IMR-90 (cell line): ENCODE measurements at regions of chr6 and their contacts with region 1.

Region 1: DNA sequence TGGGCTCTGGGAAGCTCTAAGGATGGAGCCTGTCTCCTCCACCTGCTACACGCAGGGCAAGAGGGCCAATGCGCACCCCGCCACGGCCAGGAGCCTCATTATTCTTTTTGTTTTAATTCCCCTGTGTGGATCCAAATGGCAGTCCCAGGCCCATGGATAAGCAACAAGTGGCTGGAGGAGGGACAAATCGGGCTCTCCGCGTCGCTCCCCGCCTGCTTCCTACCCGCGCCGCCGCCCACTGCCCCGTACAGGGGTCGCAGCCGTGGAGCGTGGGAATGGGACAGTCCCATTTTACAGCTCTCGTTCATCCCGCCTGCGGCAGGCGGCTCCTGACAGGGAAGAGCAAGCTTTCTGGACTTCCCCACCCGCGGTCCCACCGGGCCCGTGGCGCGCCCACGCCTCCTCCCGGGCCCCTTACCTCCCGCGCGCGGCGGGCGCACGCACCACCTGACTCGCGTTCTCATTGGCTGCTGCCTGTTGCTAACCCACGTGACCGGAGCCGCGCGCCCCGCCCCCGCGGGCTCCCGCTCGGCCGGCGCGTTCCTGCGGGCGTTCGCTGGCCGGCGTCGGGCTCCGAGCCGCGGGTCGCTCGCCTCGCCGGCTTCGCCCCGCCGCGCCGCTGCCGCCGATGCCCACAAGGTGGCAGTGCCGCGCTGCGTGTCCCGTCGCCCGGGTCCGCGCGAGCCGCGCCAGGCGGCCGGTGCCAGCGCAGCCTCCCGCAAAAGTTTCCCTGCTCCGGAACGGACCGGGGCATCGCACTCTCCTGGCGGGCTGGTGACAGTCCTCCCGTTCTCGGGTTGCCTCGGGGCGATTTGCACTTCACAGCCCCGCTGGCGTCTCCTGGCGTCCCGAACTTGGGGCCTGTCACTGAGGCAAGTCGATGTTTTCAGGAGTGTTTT is 93.3 kb downstream of the CD83 start:
- DNase-seq: peak; percentile 90
- ATAC-seq: peak; percentile 98
- H3K4me3 ChIP-seq: peak overlapping the region; percentile 72
- H3K27ac ChIP-seq: peak overlapping the region; percentile 94
- H3K4me1 ChIP-seq: peaks cover 6% of the 10 kb centered on the region; the same call in 1 of the 2 replicates
- H3K27me3 ChIP-seq: no peaks in the 10 kb centered on the region
- CTCF ChIP-seq: peak; percentile 91
- POLR2A ChIP-seq: peak; percentile 75
- RAD21 ChIP-seq: peak; percentile 98

Region 2: DNA sequence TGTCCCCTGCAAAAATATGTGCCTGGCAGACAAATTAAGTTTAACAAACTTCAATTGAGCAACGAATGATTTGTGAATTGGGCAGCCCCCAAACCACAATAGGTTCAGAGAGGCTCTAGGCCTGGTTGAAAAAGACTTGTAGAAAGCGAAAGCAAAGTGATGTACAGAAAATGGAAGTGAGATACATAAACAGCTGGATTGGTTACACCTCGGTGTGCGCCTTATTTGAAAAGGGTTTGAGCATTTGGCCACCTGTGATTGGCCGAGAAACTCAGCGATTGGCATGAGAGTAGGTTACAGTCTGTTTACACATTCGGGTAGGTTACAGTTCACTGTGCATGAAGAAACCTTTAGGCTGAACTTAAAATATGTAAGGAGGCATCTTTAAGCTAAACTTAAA is 43.6 kb after region 1 on chr6:
- CTCF ChIA-PET with region 1: no interaction called
- POLR2A ChIA-PET with region 1: no interaction called
- dilution Hi-C with region 1: no loop called
- in situ Hi-C with region 1: no loop called
- intact Hi-C with region 1: no loop called
- DNase-seq: no peak
- ATAC-seq: no peak
- H3K4me3 ChIP-seq: no peak overlapping the region
- H3K27ac ChIP-seq: no peak overlapping the region
- H3K4me1 ChIP-seq: no peaks in the 10 kb centered on the region
- H3K27me3 ChIP-seq: peaks cover 20% of the 10 kb centered on the region
- CTCF ChIP-seq: no peak
- POLR2A ChIP-seq: no peak
- RAD21 ChIP-seq: no peak

Region 3: GRCh38 chr6:14458669-14459266 is 247.9 kb after region 1 on chr6:
- CTCF ChIA-PET with region 1: no interaction called
- POLR2A ChIA-PET with region 1: no interaction called
- dilution Hi-C with region 1: no loop called
- in situ Hi-C with region 1: no loop called
- intact Hi-C with region 1: loop called (anchors 5 kb)
- DNase-seq: peak; percentile 97
- ATAC-seq: peak; percentile 92
- H3K4me3 ChIP-seq: no peak overlapping the region
- H3K27ac ChIP-seq: no peak overlapping the region
- H3K4me1 ChIP-seq: peaks cover 6% of the 10 kb centered on the region
- H3K27me3 ChIP-seq: no peaks in the 10 kb centered on the region
- CTCF ChIP-seq: no peak
- POLR2A ChIP-seq: no peak
- RAD21 ChIP-seq: no peak

Region 4: DNA sequence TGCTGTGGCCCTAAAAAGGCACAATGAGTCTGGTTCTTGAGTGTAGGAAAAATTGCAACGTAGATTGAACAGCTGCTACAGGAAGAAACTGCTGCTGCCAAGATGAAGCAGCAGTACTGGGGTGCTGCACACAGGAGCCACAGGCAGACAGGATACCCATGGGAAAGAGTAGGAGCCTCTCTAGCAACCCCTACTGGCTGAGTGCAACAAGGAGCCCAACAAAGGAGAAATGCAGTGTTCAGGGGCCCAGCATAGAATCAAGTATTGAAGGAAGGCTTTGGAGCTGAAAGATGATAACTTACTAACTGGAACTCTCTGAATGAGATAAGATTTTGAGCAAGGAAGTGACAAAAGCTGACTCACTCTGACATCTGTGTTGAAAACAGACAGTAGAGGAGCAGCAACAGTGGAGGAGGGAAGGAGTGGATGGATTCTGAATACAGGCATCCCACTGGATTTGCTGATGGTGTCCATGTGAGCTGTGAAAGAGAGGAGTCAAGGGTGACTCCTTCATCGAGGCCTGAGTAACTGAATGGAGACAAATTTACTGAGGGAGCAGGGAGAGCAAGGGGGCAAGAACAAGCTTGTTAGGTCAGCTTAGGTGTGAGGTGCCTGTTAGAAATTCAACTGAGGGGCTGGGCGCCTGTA is 500.3 kb after region 1 on chr6:
- CTCF ChIA-PET with region 1: no interaction called
- POLR2A ChIA-PET with region 1: no interaction called
- dilution Hi-C with region 1: no loop called
- in situ Hi-C with region 1: loop called (anchors 10 kb)
- intact Hi-C with region 1: loop called (anchors 1 kb)
- DNase-seq: peak; percentile 98
- ATAC-seq: peak; percentile 70
- H3K4me3 ChIP-seq: no peak overlapping the region
- H3K27ac ChIP-seq: peak overlapping the region; percentile 69
- H3K4me1 ChIP-seq: peaks cover 18% of the 10 kb centered on the region
- H3K27me3 ChIP-seq: no peaks in the 10 kb centered on the region
- CTCF ChIP-seq: peak; percentile 81
- POLR2A ChIP-seq: peak; percentile 61
- RAD21 ChIP-seq: peak; percentile 78

Region 5: GRCh38 chr6:15245361-15246216 is 1034.7 kb after region 1 on chr6 and contains the start of gene JARID2:
- CTCF ChIA-PET with region 1: no interaction called
- POLR2A ChIA-PET with region 1: interaction called, 5 read pairs
- dilution Hi-C with region 1: no loop called
- in situ Hi-C with region 1: loop called (anchors 10 kb)
- intact Hi-C with region 1: loop called (anchors 2 kb)
- DNase-seq: peak; percentile 98
- ATAC-seq: peak; percentile 70
- H3K4me3 ChIP-seq: peak within 1 kb of the TSS; percentile 69
- H3K27ac ChIP-seq: peak within 1 kb of the TSS; percentile 89
- H3K4me1 ChIP-seq: peaks cover 5% of the 10 kb centered on the region
- H3K27me3 ChIP-seq: no peaks in the 10 kb centered on the region
- CTCF ChIP-seq: no peak; the same call in 1 of the 2 replicates
- POLR2A ChIP-seq: peak; percentile 96
- RAD21 ChIP-seq: peak; percentile 34; the same call in 1 of the 2 replicates
- total RNA-seq, gene JARID2: 12.9 and 13.1 TPM in 2 replicates

Region 6: DNA sequence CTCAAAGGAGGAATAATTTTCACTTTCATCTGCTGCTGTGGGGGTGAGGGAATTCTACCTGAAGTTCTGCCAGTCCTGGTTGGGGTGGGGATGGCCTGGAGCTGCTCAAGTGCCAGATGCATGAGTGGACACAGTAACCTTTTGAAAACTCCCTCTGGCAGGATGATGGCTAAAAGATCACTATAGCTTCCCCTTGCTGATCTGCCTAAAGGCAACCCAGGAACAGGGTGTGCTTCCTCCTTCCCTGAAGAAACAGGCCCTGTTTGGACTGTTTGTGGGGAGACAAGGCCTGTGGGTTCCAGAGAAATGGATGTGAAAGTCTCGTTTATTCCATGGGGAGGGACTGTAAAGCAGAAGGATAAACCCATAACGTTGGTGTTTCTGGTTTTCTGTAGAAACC is 1275.0 kb after region 1 on chr6:
- CTCF ChIA-PET with region 1: no interaction called
- POLR2A ChIA-PET with region 1: no interaction called
- dilution Hi-C with region 1: no loop called
- in situ Hi-C with region 1: loop called (anchors 5 kb)
- intact Hi-C with region 1: loop called (anchors 2 kb)
- DNase-seq: no peak
- ATAC-seq: no peak
- H3K4me3 ChIP-seq: no peak overlapping the region
- H3K27ac ChIP-seq: no peak overlapping the region
- H3K4me1 ChIP-seq: peaks cover 5% of the 10 kb centered on the region; the same call in 1 of the 2 replicates
- H3K27me3 ChIP-seq: no peaks in the 10 kb centered on the region
- CTCF ChIP-seq: no peak
- POLR2A ChIP-seq: no peak
- RAD21 ChIP-seq: no peak